ENCODE measurements at regions of chr17 and their contacts with region 1.

Region 1: GRCh38 chr17:39704821-39705551 is 5.1 kb downstream of the ERBB2 start:
- DNase-seq: peak in 1 of 2 experiments; percentile 63
- H3K4me3 ChIP-seq: peak overlapping the region in 1 of 4 experiments; percentile 26; a peak in 4 of 8 replicates
- H3K27ac ChIP-seq: peak overlapping the region; percentile 72
- H3K4me1 ChIP-seq: peaks cover 12 to 43% (median 26%) of the 10 kb centered on the region in 4 experiments
- H3K27me3 ChIP-seq: no peaks in the 10 kb centered on the region
- CTCF ChIP-seq: peak in 1 of 3 experiments; percentile 10; a peak in 1 of 4 replicates
- EP300 ChIP-seq: peak in 1 of 2 experiments; percentile 52; a peak in 1 of 3 replicates
- POLR2A ChIP-seq: no peak
- RAD21 ChIP-seq: 0 out of 4 replicates have a peak, but pooled peaks of 1 of the 2 experiments have one; percentile 7

Region 2: DNA sequence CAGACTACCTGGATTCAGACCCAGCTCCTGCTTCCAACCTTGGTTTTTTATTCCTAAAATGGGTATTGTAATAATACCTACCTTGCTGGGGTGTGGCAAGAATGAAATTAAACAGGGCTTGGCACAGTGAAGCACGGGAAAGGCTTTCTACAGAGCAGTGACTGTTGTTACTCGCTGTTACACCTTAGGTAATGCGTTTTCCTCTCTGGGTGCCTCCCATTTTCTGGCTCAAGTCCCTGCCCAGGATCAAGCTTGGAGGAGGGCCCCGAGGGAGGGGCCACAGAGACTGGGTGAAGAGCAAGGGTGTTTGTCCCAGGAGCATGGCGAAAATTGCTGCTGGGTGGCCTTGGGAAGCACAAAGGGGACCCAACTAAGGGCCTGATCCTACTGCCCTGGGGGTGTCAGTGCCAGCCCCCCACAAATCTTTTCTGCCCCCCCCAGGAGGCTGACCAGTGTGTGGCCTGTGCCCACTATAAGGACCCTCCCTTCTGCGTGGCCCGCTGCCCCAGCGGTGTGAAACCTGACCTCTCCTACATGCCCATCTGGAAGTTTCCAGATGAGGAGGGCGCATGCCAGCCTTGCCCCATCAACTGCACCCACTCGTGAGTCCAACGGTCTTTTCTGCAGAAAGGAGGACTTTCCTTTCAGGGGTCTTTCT is 12.0 kb after region 1 on chr17:
- CTCF ChIA-PET with region 1: interaction called, 10 read pairs
- POLR2A ChIA-PET with region 1: interaction called, 23 read pairs
- DNase-seq: no peak
- H3K4me3 ChIP-seq: no peak overlapping the region
- H3K27ac ChIP-seq: no peak overlapping the region
- H3K4me1 ChIP-seq: no peaks in the 10 kb centered on the region
- H3K27me3 ChIP-seq: no peaks in the 10 kb centered on the region
- CTCF ChIP-seq: no peak
- EP300 ChIP-seq: no peak
- POLR2A ChIP-seq: no peak; a peak in 1 of 3 replicates
- RAD21 ChIP-seq: no peak

Measured in H1 (cell line).